ENCODE measurements at regions of chr3 and their contacts with region 1.

Region 1: DNA sequence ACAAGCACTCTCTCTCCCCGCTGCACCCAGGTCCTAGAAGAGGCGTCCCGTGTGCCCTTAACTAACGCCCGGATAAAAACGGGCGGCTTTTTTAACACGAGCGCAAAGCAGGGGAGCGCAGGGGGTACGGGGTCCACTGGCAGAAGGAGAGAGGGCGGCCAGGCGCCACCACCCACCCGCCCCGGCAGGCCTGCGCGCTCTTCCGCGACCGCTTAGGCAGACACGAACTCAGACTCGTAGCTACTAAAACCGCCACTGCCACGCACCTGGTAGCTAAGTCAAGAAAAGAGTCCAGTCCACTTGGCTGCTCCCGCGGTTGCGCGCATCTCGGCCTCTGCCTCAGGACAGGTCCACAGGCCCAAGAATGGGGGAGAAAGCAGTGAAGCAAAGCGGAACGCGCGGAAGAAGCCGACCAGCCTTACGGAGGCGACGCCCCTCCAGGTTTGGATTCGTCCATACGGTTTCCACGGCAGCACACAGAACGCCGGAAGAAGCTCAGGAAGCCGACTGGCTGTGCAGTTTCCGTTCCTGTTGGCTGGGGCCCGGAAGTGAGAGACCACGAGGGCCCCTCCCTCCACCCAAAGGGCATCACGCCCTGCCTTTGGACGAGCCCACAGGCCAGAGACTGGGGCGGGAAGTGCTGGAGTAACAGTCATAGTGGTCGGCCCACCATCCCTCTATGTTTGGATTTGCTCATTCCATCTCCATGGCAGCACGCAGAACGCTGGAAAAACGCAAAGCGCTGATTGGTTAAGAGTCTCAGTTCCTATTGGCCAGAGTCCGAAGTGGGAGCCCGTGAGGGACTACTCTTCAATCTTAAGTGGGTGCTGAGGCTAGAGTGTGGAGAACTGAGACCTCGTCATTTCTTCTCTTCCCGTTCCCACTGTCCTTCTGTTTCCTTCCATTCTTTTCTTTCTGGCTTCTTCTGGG is at the start of gene ULK4:
- DNase-seq: peak; percentile 99
- H3K4me3 Mint-ChIP-seq: peak within 1 kb of the TSS; percentile 81
- H3K27ac Mint-ChIP-seq: peak within 1 kb of the TSS; percentile 89
- H3K4me1 Mint-ChIP-seq: peaks cover 6% of the 10 kb centered on the region
- H3K27me3 Mint-ChIP-seq: no peaks in the 10 kb centered on the region
- CTCF ChIP-seq: no peak
- total RNA-seq, gene ULK4: 6.9 and 7.8 TPM in 2 replicates

Region 2: GRCh38 chr3:41117398-41117870 is 844.6 kb before region 1 on chr3:
- CTCF ChIA-PET with region 1: no interaction called
- POLR2A ChIA-PET with region 1: no interaction called
- intact Hi-C with region 1: no loop called
- DNase-seq: peak; percentile 98
- H3K4me3 Mint-ChIP-seq: peak overlapping the region; percentile 24
- H3K27ac Mint-ChIP-seq: peak overlapping the region; percentile 91
- H3K4me1 Mint-ChIP-seq: peaks cover 15% of the 10 kb centered on the region
- H3K27me3 Mint-ChIP-seq: no peaks in the 10 kb centered on the region
- CTCF ChIP-seq: no peak

Region 3: GRCh38 chr3:41933146-41933676 is 28.8 kb before region 1 on chr3:
- CTCF ChIA-PET with region 1: interaction called, 3 read pairs
- POLR2A ChIA-PET with region 1: interaction called, 10 read pairs
- intact Hi-C with region 1: no loop called
- DNase-seq: peak; percentile 81
- H3K4me3 Mint-ChIP-seq: no peak overlapping the region
- H3K27ac Mint-ChIP-seq: no peak overlapping the region
- H3K4me1 Mint-ChIP-seq: no peaks in the 10 kb centered on the region
- H3K27me3 Mint-ChIP-seq: no peaks in the 10 kb centered on the region
- CTCF ChIP-seq: no peak